Posterior vena cava (tissue), 2 donors: ENCODE measurements at regions of chr16 and their contacts with region 1.

Region 1: GRCh38 chr16:56257239-56257638 is 66.0 kb downstream of the GNAO1 start:
- DNase-seq: no peak

Region 2: DNA sequence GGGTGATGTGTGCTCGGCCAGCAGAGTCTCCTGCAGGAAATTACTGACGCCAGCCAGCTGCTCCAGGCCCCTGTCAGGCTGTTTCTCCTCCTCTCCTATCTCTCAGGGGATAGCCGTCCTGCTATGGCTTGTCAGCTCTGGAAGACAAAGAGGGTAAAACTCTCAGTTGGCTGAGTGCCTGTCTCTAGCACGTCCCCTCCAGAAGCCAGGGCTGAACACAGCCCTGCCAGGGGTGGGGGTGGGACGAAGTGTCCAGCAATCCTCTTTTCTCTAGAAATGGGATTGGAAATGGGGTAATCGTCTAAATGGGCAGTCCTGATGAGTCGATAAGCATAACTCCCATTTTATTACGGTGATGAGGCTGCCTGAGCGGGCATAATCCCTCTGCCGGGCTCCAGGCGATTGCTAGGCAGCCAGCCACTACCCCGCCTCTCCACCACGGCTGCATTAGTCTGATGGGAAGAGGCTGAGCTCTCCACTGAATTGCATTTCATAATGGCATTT is 155.0 kb before region 1 on chr16:
- intact Hi-C with region 1: no loop called
- DNase-seq: peak; percentile 92

Region 3: GRCh38 chr16:57493767-57494166 is 1236.5 kb after region 1 on chr16:
- intact Hi-C with region 1: loop called in 1 of 2 experiments (anchors 5 kb)
- DNase-seq: no peak